Endothelial cell of umbilical vein (primary cell): ENCODE measurements at regions of chr19 and their contacts with region 1.

Region 1: DNA sequence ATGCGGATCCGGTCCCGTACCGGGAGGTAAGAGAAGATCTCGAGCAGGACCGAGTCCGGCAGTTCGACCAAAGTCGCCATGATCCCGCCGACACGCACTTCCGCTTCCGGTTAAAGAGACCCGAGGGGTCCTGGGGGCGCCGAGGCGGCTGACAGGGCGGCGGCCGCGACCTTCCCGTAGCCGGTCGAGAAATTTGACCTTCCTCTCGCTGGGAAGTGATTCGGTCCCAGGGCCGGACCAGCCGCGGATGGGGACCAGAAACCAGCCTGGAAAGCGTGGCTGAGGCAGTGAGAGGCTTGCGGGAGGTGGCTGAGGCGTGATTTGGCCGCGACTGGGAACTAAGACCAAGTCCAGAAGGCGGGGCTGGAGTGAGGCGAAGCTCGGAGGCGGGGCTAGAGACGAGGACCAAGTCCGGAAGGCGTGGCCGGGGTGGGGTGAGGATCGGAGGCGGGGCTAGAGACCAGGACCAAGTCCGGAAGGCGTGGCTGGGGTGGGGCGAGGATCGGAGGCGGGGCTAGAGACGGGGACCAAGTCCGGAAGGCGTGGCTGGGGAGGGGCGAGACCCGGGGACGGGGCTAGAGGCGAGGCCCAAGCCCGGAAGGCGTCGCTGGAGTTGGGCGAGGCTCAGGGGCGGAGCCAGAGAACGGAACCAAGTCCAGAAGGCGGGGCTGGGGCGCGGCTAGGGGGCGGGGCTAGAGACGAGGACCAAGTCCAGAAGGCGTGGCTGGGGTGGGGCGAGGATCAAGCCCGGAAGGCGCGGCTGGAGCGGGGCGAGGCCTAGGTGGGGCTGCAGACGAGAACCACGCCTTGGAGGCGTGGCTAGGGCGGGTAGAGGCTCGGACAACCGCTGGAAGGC is at the start of gene FBXL12:
- DNase-seq: peak; percentile 99
- H3K4me3 ChIP-seq: peak within 1 kb of the TSS; percentile 42 to 82 (median 74)
- H3K27ac ChIP-seq: peak within 1 kb of the TSS; percentile 56
- H3K4me1 ChIP-seq: peaks cover 12% of the 10 kb centered on the region
- H3K27me3 ChIP-seq: no peaks in the 10 kb centered on the region
- CTCF ChIP-seq: no peak
- POLR2A ChIP-seq: peak; percentile 86
- total RNA-seq, gene FBXL12: 25.8 and 26.9 TPM in 2 replicates

Region 2: GRCh38 chr19:9834726-9835506 is 16.0 kb after region 1 on chr19 and contains the start of gene PIN1:
- CTCF ChIA-PET with region 1: no interaction called
- POLR2A ChIA-PET with region 1: no interaction called
- dilution Hi-C with region 1: no loop called
- intact Hi-C with region 1: loop called (anchors 1 kb)
- DNase-seq: peak; percentile 99
- H3K4me3 ChIP-seq: peak within 1 kb of the TSS; percentile 80 to 87 (median 86)
- H3K27ac ChIP-seq: no peak within 1 kb of the TSS
- H3K4me1 ChIP-seq: peaks cover 9% of the 10 kb centered on the region
- H3K27me3 ChIP-seq: no peaks in the 10 kb centered on the region
- CTCF ChIP-seq: peak; percentile 52 to 66
- POLR2A ChIP-seq: peak; percentile 27
- total RNA-seq, gene PIN1: 97.4 and 98.1 TPM in 2 replicates

Region 3: DNA sequence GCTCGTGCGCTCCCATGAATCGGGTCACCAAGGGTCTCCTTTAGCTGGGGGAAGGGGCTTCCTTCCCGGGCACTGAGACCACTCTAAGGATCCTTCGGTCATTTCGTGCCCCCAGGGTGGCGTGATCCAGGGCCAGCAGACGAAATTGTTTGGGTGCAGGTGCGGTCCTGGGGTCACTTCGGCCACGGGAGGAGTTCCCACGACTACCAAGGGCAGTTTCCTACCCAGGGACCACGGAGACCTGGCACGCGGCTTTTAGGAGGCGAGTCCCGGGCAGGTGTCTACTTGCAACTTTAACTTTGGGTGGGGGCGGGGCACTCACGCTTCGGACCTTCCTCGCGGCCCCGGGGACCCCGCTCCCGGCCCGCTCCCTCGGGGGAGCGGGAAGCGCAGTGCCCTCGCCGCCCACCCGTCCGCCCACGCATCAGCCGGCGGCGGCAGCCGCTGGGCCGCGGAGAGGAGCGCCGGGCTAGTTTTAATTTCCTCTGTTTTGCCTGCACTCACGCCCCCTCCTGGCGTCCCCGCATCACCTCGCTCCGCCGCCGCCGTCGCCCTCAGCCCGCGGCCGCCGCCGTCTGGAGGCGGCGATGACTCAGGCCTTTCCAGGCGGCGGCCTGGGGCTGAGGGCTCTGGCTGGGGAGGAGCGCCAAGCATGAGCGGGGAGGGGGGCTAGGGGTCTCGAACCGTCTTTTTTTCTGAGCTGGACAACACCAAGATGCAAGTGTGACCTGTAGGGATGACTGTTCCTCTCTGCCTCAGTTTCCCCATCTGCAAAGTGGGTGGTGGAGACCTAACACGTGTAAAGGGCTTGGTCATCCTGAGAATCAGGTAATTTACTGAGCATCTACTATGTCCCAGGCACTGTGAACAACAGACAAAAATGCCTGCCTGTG is 95.6 kb after region 1 on chr19:
- CTCF ChIA-PET with region 1: no interaction called
- POLR2A ChIA-PET with region 1: no interaction called
- dilution Hi-C with region 1: no loop called
- intact Hi-C with region 1: loop called (anchors 1 kb)
- DNase-seq: peak; percentile 88
- H3K4me3 ChIP-seq: peak overlapping the region; percentile 38 to 56 (median 56)
- H3K27ac ChIP-seq: peak overlapping the region; percentile 8
- H3K4me1 ChIP-seq: peaks cover 7% of the 10 kb centered on the region
- H3K27me3 ChIP-seq: peaks cover 18 to 25% of the 10 kb centered on the region in 2 experiments
- CTCF ChIP-seq: peak; percentile 65 to 70
- POLR2A ChIP-seq: no peak

Region 4: GRCh38 chr19:10279737-10280442 is 460.9 kb after region 1 on chr19:
- CTCF ChIA-PET with region 1: no interaction called
- POLR2A ChIA-PET with region 1: no interaction called
- dilution Hi-C with region 1: no loop called
- intact Hi-C with region 1: no loop called
- DNase-seq: no peak
- H3K4me3 ChIP-seq: no peak overlapping the region
- H3K27ac ChIP-seq: no peak overlapping the region
- H3K4me1 ChIP-seq: no peaks in the 10 kb centered on the region
- H3K27me3 ChIP-seq: no peaks in the 10 kb centered on the region
- CTCF ChIP-seq: no peak
- POLR2A ChIP-seq: no peak